K562 (cell line): ENCODE measurements at regions of chr19 and their contacts with region 1.

Region 1: GRCh38 chr19:21698215-21698614 is 69.2 kb downstream of the ZNF100 start:
- DNase-seq: peak in 2 of 4 experiments; percentile 9 to 51
- ATAC-seq: peak; percentile 77
- H3K4me3 ChIP-seq: no peak overlapping the region
- H3K27ac ChIP-seq: no peak overlapping the region
- H3K4me1 ChIP-seq: peaks cover 11 to 17% of the 10 kb centered on the region in 2 experiments
- H3K27me3 ChIP-seq: no peaks in the 10 kb centered on the region
- CTCF ChIP-seq: peak; percentile 34 to 64 (median 45); a peak in 5 of 6 replicates
- EP300 ChIP-seq: no peak
- POLR2A ChIP-seq: no peak
- RAD21 ChIP-seq: peak; percentile 59 to 90

Region 2: DNA sequence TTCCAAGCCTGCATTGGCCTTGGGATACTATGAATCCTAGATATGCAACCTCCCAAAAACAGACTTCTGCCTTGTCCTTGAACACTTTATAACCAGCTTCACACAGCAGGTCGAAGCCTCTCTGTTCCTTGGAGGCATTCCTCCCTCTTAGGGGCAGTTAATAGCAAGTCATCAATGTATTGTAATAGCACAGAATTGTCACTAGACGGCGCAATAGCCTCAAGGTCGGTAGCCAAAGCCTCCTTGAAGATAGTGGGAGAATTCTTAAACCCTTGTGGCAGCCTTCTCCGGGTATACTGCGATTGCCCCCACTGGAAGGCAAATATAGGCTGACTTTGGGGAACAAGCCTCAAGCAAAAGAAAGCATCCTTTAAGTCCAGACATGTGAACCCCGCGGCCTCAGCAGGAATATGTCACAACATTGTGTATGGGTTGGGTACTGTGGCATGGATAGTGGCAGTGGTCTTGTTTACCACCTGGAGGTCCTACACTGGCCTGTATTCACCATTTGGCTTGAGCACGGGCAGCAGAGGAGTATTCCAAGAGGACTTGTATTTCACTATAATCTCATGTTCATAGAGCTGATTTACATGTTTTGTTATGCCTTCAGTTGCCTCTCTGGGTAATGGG is 495.2 kb before region 1 on chr19:
- CTCF ChIA-PET with region 1: no interaction called
- POLR2A ChIA-PET with region 1: no interaction called
- in situ Hi-C with region 1: no loop called
- intact Hi-C with region 1: loop called (anchors 5 kb)
- DNase-seq: peak; percentile 53 to 68 (median 59)
- ATAC-seq: peak; percentile 88
- H3K4me3 ChIP-seq: no peak overlapping the region
- H3K27ac ChIP-seq: no peak overlapping the region
- H3K4me1 ChIP-seq: peaks cover 0 to 8% of the 10 kb centered on the region in 2 experiments; a peak in 2 of 5 replicates
- H3K27me3 ChIP-seq: no peaks in the 10 kb centered on the region
- CTCF ChIP-seq: peak; percentile 78 to 88 (median 82)
- EP300 ChIP-seq: no peak
- POLR2A ChIP-seq: no peak
- RAD21 ChIP-seq: peak; percentile 38 to 87; a peak in 3 of 4 replicates

Region 3: DNA sequence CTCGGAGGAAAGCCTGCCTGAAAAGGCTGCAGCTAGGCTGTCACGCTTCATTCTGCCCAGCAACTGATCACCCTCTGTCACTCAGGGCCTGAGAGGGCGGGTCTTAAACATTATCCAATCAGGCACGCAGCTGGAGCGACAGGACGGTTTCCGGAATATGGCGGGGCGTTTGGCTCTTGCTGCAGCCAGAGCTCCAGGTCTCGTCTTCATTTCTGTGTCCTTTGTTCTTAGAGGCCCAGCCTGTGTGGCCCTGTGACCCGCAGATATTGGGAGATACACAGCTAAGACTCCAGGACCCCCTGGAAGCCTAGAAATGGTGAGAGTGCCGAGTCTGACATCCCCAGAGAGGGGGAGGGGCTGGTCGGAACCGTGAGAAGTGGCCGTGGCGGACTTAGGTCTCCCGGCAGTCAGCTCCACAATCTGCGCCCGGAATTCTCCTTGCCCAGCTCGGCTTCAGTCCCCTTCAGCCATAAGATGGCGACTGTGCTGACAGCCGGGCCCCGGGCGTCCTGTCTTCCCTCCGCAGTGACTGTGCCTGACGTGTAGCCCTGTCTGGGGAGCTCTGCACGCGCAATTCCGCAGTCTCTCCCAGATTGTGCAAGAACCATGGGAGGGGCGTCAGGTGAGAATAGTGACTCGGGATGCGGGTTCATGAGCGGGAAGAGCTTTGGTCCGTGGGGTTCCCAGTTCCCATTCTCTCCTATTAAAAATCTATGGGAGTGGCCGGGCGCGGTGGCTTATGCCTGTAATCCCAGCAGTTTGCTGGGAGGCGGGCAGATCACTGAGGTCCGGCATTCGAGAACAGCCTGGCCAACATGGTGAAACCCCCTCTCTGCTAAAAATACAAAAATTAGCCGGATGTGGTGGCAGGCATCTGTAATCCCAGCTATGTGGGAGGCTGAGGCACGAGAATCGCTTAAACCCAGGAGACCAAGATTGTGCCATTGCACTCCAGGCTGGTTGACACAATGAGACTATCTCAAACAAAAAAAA is 192.5 kb before region 1 on chr19 and contains the start of gene ZNF429:
- CTCF ChIA-PET with region 1: no interaction called
- POLR2A ChIA-PET with region 1: no interaction called
- in situ Hi-C with region 1: no loop called
- intact Hi-C with region 1: loop called (anchors 5 kb)
- DNase-seq: peak; percentile 83 to 96 (median 89)
- ATAC-seq: peak; percentile 99
- H3K4me3 ChIP-seq: peak within 1 kb of the TSS; percentile 76
- H3K27ac ChIP-seq: peak within 1 kb of the TSS; percentile 96
- H3K4me1 ChIP-seq: peaks cover 9 to 17% of the 10 kb centered on the region in 2 experiments; a peak in 3 of 5 replicates
- H3K27me3 ChIP-seq: no peaks in the 10 kb centered on the region
- CTCF ChIP-seq: 0 out of 6 replicates have a peak, but pooled peaks of 2 of the 3 experiments have one; percentile 8 to 17
- EP300 ChIP-seq: no peak
- POLR2A ChIP-seq: peak; percentile 93
- RAD21 ChIP-seq: peak in 1 of 2 experiments; percentile 38; a peak in 1 of 4 replicates
- polyA plus RNA-seq, gene ZNF429: 16.5 to 24.5 TPM

Region 4: DNA sequence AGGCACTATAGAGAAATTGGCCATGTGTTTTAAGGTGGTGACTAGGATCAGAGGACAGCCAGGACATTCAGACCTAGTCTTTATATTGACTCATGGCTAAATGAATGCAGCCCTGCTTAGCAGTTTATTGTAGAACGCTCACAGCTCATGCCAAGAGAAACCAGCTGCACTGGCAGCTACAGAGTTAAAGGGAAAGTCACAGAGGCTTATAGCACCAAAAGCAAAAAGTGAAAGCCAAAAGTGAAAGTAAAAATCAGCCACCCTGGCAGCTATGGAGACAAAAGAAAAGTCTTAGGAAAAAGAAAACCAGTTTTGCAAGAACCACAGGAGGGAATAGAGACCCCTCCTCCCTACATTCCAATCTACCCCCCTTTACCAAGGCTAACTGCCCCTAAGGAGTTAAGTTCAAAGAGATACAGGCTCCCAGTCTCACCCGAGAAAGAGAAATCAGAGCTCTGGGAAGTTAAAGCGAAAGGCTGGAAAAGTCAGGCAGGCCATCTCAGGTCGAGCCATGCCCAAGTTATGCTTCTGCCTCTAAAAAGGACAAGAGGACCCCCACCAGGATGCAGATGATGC is 93.8 kb before region 1 on chr19:
- CTCF ChIA-PET with region 1: no interaction called
- POLR2A ChIA-PET with region 1: no interaction called
- in situ Hi-C with region 1: no loop called
- intact Hi-C with region 1: loop called (anchors 5 kb)
- DNase-seq: no peak
- ATAC-seq: no peak
- H3K4me3 ChIP-seq: no peak overlapping the region; the same call in 1 of the 2 replicates
- H3K27ac ChIP-seq: peak overlapping the region; percentile 96; the same call in 2 of the 3 replicates
- H3K4me1 ChIP-seq: peaks cover 31 to 62% of the 10 kb centered on the region in 2 experiments
- H3K27me3 ChIP-seq: no peaks in the 10 kb centered on the region
- CTCF ChIP-seq: no peak
- EP300 ChIP-seq: no peak
- POLR2A ChIP-seq: no peak
- RAD21 ChIP-seq: no peak

Region 5: DNA sequence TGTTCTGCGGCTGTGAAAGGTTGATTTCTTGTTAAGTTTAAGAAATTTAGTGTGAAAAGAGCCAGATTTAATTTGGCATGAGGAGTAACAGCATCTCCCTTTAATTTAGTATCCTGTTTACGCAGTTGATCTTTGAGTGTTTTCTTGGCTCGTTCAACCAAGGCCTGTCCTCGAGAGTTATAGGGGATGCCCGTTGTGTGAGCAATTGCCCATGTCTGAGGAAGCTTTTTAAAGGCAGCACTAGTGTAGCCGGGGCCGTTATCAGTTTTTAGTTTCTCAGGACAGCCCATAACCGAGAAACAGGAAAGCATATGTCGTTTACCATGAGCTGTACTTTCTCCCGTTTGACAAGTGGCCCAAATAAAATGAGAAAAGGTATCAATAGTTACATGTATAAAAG is 185.3 kb after region 1 on chr19:
- CTCF ChIA-PET with region 1: no interaction called
- POLR2A ChIA-PET with region 1: no interaction called
- in situ Hi-C with region 1: no loop called
- intact Hi-C with region 1: no loop called
- DNase-seq: no peak
- ATAC-seq: no peak
- H3K4me3 ChIP-seq: no peak overlapping the region
- H3K27ac ChIP-seq: no peak overlapping the region
- H3K4me1 ChIP-seq: no peaks in the 10 kb centered on the region
- H3K27me3 ChIP-seq: no peaks in the 10 kb centered on the region
- CTCF ChIP-seq: no peak
- EP300 ChIP-seq: no peak
- POLR2A ChIP-seq: no peak
- RAD21 ChIP-seq: no peak

Region 6: GRCh38 chr19:22545751-22546150 is 847.5 kb after region 1 on chr19:
- CTCF ChIA-PET with region 1: no interaction called
- POLR2A ChIA-PET with region 1: no interaction called
- in situ Hi-C with region 1: no loop called
- intact Hi-C with region 1: loop called (anchors 10 kb)
- DNase-seq: peak; percentile 60 to 68 (median 61)
- ATAC-seq: peak; percentile 70
- H3K4me3 ChIP-seq: no peak overlapping the region
- H3K27ac ChIP-seq: no peak overlapping the region
- H3K4me1 ChIP-seq: no peaks in the 10 kb centered on the region
- H3K27me3 ChIP-seq: no peaks in the 10 kb centered on the region
- CTCF ChIP-seq: peak; percentile 44 to 71 (median 60); a peak in 5 of 6 replicates
- EP300 ChIP-seq: no peak
- POLR2A ChIP-seq: no peak
- RAD21 ChIP-seq: peak; percentile 46 to 72